ENCODE measurements at regions of chr22 and their contacts with region 1.

Region 1: DNA sequence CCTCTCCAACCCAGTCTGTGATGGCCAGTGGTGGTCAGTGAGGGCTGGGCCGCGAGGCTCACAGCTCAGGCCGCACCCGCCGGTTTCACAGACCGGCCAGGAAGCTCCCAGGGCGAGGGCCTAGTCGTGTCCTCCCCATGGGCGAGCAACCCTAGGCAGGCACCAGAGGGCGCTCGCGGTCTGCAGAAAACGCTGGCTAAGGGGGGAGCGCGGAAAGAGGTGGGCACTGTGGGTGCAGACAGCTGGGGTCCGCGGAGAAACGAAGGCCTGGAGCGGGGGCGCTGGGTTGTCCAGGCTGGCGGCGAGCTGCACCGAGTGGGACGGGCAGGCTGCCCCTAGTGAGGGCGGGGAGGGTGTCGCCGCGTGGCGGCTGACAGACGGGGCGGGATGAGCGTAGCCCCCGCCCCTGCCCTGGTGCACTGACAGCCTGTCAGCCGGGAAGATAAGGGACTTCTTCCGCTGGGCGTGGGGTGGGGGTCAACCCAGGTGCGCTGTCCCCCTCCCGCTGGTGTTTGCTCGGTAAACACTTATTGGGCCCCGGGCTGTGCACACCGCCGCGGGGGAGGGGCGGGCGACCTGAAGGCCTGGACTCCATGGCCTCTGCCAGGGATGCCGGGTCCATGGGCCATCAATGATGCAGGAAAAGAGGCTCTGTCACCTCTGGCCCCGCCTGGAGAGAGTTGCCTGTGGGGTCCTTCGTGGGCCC is 7.5 kb downstream of the GP1BB start:
- DNase-seq: peak; percentile 90
- ATAC-seq: peak; percentile 89
- H3K4me3 Mint-ChIP-seq: peak overlapping the region; percentile 57
- H3K27ac Mint-ChIP-seq: no peak overlapping the region
- H3K4me1 Mint-ChIP-seq: no peaks in the 10 kb centered on the region
- H3K27me3 Mint-ChIP-seq: peaks cover 48% of the 10 kb centered on the region
- CTCF ChIP-seq: peak; percentile 92

Region 2: GRCh38 chr22:19691721-19692341 is 39.0 kb before region 1 on chr22:
- CTCF ChIA-PET with region 1: interaction called, 10 read pairs
- POLR2A ChIA-PET with region 1: no interaction called
- DNase-seq: no peak
- ATAC-seq: peak; percentile 10
- H3K4me3 Mint-ChIP-seq: no peak overlapping the region
- H3K27ac Mint-ChIP-seq: no peak overlapping the region
- H3K4me1 Mint-ChIP-seq: peaks cover 27% of the 10 kb centered on the region
- H3K27me3 Mint-ChIP-seq: peaks cover 4% of the 10 kb centered on the region; the same call in 1 of the 2 replicates
- CTCF ChIP-seq: no peak

Region 3: GRCh38 chr22:19745155-19746101 is 14.6 kb after region 1 on chr22:
- CTCF ChIA-PET with region 1: interaction called, 110 read pairs
- POLR2A ChIA-PET with region 1: no interaction called
- DNase-seq: no peak
- ATAC-seq: peak; percentile 25; the same call in 1 of the 2 replicates
- H3K4me3 Mint-ChIP-seq: no peak overlapping the region
- H3K27ac Mint-ChIP-seq: no peak overlapping the region
- H3K4me1 Mint-ChIP-seq: 0 out of 2 replicates have a peak, but pooled peaks cover 2% of the 10 kb centered on the region
- H3K27me3 Mint-ChIP-seq: no peaks in the 10 kb centered on the region; the same call in 1 of the 2 replicates
- CTCF ChIP-seq: no peak

Region 4: DNA sequence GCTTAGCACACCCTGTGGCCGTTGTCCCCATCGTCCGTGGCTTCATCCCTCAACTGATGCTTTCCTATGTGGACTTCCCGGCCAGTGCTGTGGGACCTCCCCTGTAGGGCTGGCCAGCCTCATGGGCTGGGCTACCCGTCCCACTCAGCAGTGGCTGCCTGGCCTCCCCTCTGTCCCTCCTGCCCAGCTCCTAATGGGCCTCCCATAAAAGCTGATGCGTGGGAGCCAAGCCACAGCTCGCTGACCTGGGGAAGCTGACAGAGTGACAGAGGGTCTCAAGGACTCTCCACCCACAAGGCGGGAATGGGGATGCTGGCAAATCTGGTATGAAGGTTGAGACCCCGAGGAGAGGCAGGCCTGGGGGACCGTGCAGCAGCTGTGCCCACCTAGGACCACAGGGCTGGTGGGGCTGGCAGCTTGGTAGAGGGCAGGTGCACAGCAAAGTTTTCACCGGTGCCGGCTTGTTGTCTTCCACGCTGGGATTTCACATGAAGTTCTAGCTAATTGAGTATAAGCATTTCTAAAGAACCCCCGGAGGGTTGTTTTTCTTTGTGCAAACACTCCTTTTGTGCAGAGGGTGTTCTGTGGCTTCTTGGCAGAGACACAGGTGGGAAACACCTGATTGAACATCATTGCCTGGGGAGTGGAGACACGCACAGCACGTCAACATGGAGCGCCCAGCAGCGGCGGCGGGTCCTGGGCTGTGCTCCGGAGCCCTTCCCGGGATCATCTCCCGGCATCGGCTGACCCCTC is 53.0 kb after region 1 on chr22:
- CTCF ChIA-PET with region 1: interaction called, 13 read pairs
- POLR2A ChIA-PET with region 1: no interaction called
- DNase-seq: peak; percentile 6
- ATAC-seq: no peak
- H3K4me3 Mint-ChIP-seq: no peak overlapping the region
- H3K27ac Mint-ChIP-seq: no peak overlapping the region
- H3K4me1 Mint-ChIP-seq: no peaks in the 10 kb centered on the region
- H3K27me3 Mint-ChIP-seq: peaks cover 2% of the 10 kb centered on the region; the same call in 1 of the 2 replicates
- CTCF ChIP-seq: no peak

Region 5: GRCh38 chr22:19832476-19833108 is 101.8 kb after region 1 on chr22:
- CTCF ChIA-PET with region 1: interaction called, 10 read pairs
- POLR2A ChIA-PET with region 1: no interaction called
- DNase-seq: no peak
- ATAC-seq: no peak
- H3K4me3 Mint-ChIP-seq: no peak overlapping the region
- H3K27ac Mint-ChIP-seq: peak overlapping the region; percentile 8; the same call in 1 of the 2 replicates
- H3K4me1 Mint-ChIP-seq: no peaks in the 10 kb centered on the region
- H3K27me3 Mint-ChIP-seq: no peaks in the 10 kb centered on the region
- CTCF ChIP-seq: no peak

Region 6: DNA sequence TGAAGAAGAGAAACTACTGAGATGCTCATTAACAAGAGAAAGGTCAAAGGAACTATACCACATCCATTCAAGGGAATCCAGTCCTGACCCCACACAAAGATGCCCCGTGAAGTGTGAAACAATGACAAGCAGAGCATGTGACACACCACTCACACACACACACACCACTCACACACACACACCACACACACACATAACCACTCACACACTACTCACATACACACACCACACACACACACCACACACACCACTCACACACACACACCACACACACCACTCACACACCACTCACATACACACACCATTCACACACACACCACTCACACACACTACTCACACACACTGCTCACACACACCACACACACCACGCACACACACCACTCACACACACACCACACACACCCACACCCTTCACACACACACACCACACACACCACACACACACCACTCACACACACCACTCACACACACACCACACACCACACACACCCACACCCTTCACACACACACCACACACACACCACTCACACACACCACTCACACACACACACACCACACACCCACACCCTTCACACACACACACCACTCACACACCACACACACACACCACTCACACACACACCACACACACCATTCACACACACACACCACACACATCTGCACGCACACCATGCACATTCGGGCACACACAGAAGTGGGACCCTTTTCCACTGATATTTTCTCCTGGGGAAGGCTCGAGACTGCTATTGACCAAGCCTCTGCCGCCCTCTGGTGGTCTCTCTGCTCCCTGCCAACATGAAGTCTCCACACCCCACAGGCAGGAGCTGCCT is 178.8 kb after region 1 on chr22:
- CTCF ChIA-PET with region 1: interaction called, 155 read pairs
- POLR2A ChIA-PET with region 1: no interaction called
- DNase-seq: peak; percentile 90
- ATAC-seq: peak; percentile 87
- H3K4me3 Mint-ChIP-seq: no peak overlapping the region
- H3K27ac Mint-ChIP-seq: no peak overlapping the region; the same call in 1 of the 2 replicates
- H3K4me1 Mint-ChIP-seq: no peaks in the 10 kb centered on the region; the same call in 1 of the 2 replicates
- H3K27me3 Mint-ChIP-seq: no peaks in the 10 kb centered on the region
- CTCF ChIP-seq: peak; percentile 80

Region 7: GRCh38 chr22:20013382-20013871 is 282.6 kb after region 1 on chr22:
- CTCF ChIA-PET with region 1: interaction called, 14 read pairs
- POLR2A ChIA-PET with region 1: no interaction called
- DNase-seq: peak; percentile 91
- ATAC-seq: peak; percentile 62
- H3K4me3 Mint-ChIP-seq: no peak overlapping the region
- H3K27ac Mint-ChIP-seq: no peak overlapping the region
- H3K4me1 Mint-ChIP-seq: peaks cover 8% of the 10 kb centered on the region
- H3K27me3 Mint-ChIP-seq: peaks cover 29% of the 10 kb centered on the region
- CTCF ChIP-seq: peak; percentile 35; the same call in 1 of the 2 replicates

Measured in WTC11 (cell line).